ENCODE measurements at regions of chr3 and their contacts with region 1.

Region 1: GRCh38 chr3:128879125-128879969 is at the start of gene ACAD9:
- DNase-seq: peak; percentile 99
- ATAC-seq: peak; percentile 94
- H3K4me3 Mint-ChIP-seq: peak within 1 kb of the TSS; percentile 96
- H3K27ac Mint-ChIP-seq: peak within 1 kb of the TSS; percentile 92
- H3K4me1 Mint-ChIP-seq: peaks cover 46% of the 10 kb centered on the region
- H3K27me3 Mint-ChIP-seq: no peaks in the 10 kb centered on the region
- total RNA-seq, gene ACAD9: 55.9 to 63.5 TPM

Region 2: DNA sequence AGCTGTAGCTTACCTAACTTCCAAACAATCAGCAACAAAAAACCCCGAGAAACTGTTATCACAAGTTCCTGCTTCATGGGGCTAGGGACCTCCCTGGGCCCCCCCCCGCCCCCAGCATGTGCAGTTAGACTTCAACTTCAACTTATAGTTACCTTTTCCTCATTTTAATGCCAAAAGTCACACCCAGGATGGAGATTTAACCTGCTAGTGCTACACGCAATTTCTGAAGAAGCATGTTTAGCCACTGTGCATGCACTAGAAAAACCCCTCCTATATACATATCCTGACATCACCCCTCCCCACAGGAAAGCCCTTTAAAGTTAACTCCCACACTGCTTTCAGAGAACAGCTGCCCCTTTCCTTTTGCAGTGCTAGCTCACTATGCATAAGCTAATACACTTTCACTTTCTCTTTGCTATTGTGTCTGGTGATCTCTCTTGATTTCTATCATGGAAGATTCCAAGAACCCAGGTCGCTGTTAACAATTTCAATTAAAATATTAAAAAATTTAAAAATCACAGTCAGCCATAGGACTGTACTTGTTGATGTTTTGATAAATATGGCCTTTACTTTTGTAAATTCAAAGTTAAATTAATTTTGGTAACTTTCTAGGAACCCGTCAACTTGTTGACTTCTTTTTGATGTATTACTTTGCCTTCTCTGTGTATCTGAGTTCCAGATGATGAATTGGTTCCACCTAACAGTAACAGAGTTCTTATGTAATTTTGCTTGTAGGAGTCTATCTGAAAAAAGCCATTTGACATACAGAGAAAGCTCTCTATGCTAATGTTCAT is 75.1 kb before region 1 on chr3:
- POLR2A ChIA-PET with region 1: interaction called, 10 read pairs
- DNase-seq: no peak
- ATAC-seq: peak; percentile 97
- H3K4me3 Mint-ChIP-seq: peak overlapping the region; percentile 72
- H3K27ac Mint-ChIP-seq: peak overlapping the region; percentile 88
- H3K4me1 Mint-ChIP-seq: peaks cover 62% of the 10 kb centered on the region
- H3K27me3 Mint-ChIP-seq: no peaks in the 10 kb centered on the region

Region 3: GRCh38 chr3:128922804-128923459 is 43.6 kb after region 1 on chr3:
- POLR2A ChIA-PET with region 1: interaction called, 36 read pairs
- DNase-seq: peak; percentile 61
- ATAC-seq: peak; percentile 85
- H3K4me3 Mint-ChIP-seq: peak overlapping the region; percentile 75
- H3K27ac Mint-ChIP-seq: peak overlapping the region; percentile 87
- H3K4me1 Mint-ChIP-seq: peaks cover 22% of the 10 kb centered on the region
- H3K27me3 Mint-ChIP-seq: no peaks in the 10 kb centered on the region

Measured in activated naive CD8-positive, alpha-beta T cell treated with anti-CD3 and anti-CD28 coated beads, Interleukin-2, amount 10 ng/mL, durations not matched to agents 7 days and 5 days (primary cell).